Activated B cell treated with CpG ODN at 0.5 μM for 24 hours (primary cell): ENCODE measurements at regions of chr9 and their contacts with region 1.

Region 1: GRCh38 chr9:20622330-20623020 is at the start of gene MLLT3:
- DNase-seq: peak; percentile 87
- ATAC-seq: peak; percentile 88
- H3K4me3 Mint-ChIP-seq: peak within 1 kb of the TSS; percentile 92
- H3K27ac Mint-ChIP-seq: peak within 1 kb of the TSS; percentile 80
- H3K4me1 Mint-ChIP-seq: peaks cover 37% of the 10 kb centered on the region
- H3K27me3 Mint-ChIP-seq: peaks cover 17% of the 10 kb centered on the region
- CTCF ChIP-seq: no peak
- total RNA-seq, gene MLLT3: 1.4 and 1.5 TPM in 2 replicates

Region 2: GRCh38 chr9:19456996-19457692 is 1165.3 kb before region 1 on chr9:
- CTCF ChIA-PET with region 1: no interaction called
- POLR2A ChIA-PET with region 1: no interaction called
- intact Hi-C with region 1: loop called (anchors 10 kb)
- DNase-seq: peak; percentile 32
- ATAC-seq: peak; percentile 97
- H3K4me3 Mint-ChIP-seq: no peak overlapping the region
- H3K27ac Mint-ChIP-seq: no peak overlapping the region
- H3K4me1 Mint-ChIP-seq: peaks cover 13% of the 10 kb centered on the region
- H3K27me3 Mint-ChIP-seq: no peaks in the 10 kb centered on the region
- CTCF ChIP-seq: peak; percentile 80

Region 3: GRCh38 chr9:20552874-20553575 is 69.5 kb before region 1 on chr9:
- CTCF ChIA-PET with region 1: no interaction called
- POLR2A ChIA-PET with region 1: no interaction called
- intact Hi-C with region 1: loop called (anchors 2 kb)
- DNase-seq: no peak
- ATAC-seq: no peak
- H3K4me3 Mint-ChIP-seq: no peak overlapping the region
- H3K27ac Mint-ChIP-seq: no peak overlapping the region
- H3K4me1 Mint-ChIP-seq: peaks cover 11% of the 10 kb centered on the region
- H3K27me3 Mint-ChIP-seq: peaks cover 1% of the 10 kb centered on the region
- CTCF ChIP-seq: no peak

Region 4: GRCh38 chr9:20658677-20659473 is 36.4 kb after region 1 on chr9:
- CTCF ChIA-PET with region 1: no interaction called
- POLR2A ChIA-PET with region 1: no interaction called
- intact Hi-C with region 1: loop called (anchors 5 kb)
- DNase-seq: no peak
- ATAC-seq: no peak
- H3K4me3 Mint-ChIP-seq: peak overlapping the region; percentile 84
- H3K27ac Mint-ChIP-seq: peak overlapping the region; percentile 10
- H3K4me1 Mint-ChIP-seq: no peaks in the 10 kb centered on the region
- H3K27me3 Mint-ChIP-seq: peaks cover 4% of the 10 kb centered on the region
- CTCF ChIP-seq: no peak

Region 5: GRCh38 chr9:21031091-21031807 is 408.8 kb after region 1 on chr9 and contains the start of gene HACD4:
- CTCF ChIA-PET with region 1: no interaction called
- POLR2A ChIA-PET with region 1: no interaction called
- intact Hi-C with region 1: loop called (anchors 2 kb)
- DNase-seq: peak; percentile 59
- ATAC-seq: peak; percentile 78
- H3K4me3 Mint-ChIP-seq: peak within 1 kb of the TSS; percentile 81
- H3K27ac Mint-ChIP-seq: peak within 1 kb of the TSS; percentile 70
- H3K4me1 Mint-ChIP-seq: peaks cover 17% of the 10 kb centered on the region
- H3K27me3 Mint-ChIP-seq: no peaks in the 10 kb centered on the region
- CTCF ChIP-seq: no peak
- total RNA-seq, gene HACD4: 3.3 and 4.1 TPM in 2 replicates

Region 6: DNA sequence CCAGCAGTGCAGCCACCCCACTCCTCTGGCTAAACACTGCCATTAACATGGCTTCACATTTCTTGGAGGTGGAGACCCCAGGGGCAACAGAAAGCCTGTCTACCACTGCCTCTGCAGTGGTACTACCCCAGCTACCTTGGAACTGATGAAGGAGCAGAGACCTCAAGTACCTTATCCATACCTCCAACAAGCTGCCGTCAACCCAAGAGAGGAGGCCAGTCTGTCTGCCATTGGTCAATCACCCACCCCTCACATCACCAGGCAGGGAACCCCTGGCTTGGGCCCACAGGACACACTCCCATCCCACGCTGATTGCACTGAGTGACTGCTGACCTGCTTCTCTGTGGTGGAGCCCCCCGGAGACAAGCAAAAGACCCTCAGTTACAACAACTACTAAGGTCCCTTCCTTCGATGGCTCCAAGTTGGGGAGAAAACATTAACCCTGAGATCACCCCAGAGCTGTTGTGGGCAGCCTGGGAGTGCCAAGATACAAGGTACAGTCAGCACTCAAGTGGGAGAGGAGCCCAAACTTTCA is 611.7 kb after region 1 on chr9:
- CTCF ChIA-PET with region 1: no interaction called
- POLR2A ChIA-PET with region 1: no interaction called
- intact Hi-C with region 1: no loop called
- DNase-seq: no peak
- ATAC-seq: no peak
- H3K4me3 Mint-ChIP-seq: no peak overlapping the region
- H3K27ac Mint-ChIP-seq: no peak overlapping the region
- H3K4me1 Mint-ChIP-seq: peaks cover 6% of the 10 kb centered on the region
- H3K27me3 Mint-ChIP-seq: peaks cover 6% of the 10 kb centered on the region
- CTCF ChIP-seq: no peak

Region 7: GRCh38 chr9:21802195-21803000 is 1179.9 kb after region 1 on chr9 and contains the start of gene MTAP:
- CTCF ChIA-PET with region 1: no interaction called
- POLR2A ChIA-PET with region 1: no interaction called
- intact Hi-C with region 1: loop called (anchors 5 kb)
- DNase-seq: peak; percentile 68
- ATAC-seq: peak; percentile 88
- H3K4me3 Mint-ChIP-seq: peak within 1 kb of the TSS; percentile 99
- H3K27ac Mint-ChIP-seq: peak within 1 kb of the TSS; percentile 91
- H3K4me1 Mint-ChIP-seq: peaks cover 53% of the 10 kb centered on the region
- H3K27me3 Mint-ChIP-seq: peaks cover 15% of the 10 kb centered on the region
- CTCF ChIP-seq: no peak
- total RNA-seq, gene MTAP: 30.4 and 43.2 TPM in 2 replicates